ENCODE measurements at regions of chr15 and their contacts with region 1.

Region 1: GRCh38 chr15:98548154-98548971 is 100.0 kb upstream of the IGF1R start:
- DNase-seq: peak; percentile 93
- H3K4me3 ChIP-seq: peak overlapping the region; percentile 39 to 60 (median 54)
- H3K27ac ChIP-seq: peak overlapping the region; percentile 86 to 94 (median 92)
- H3K4me1 ChIP-seq: peaks cover 0 to 27% (median 16%) of the 10 kb centered on the region in 4 donors
- H3K27me3 ChIP-seq: no peaks in the 10 kb centered on the region
- CTCF ChIP-seq: peak in 2 of 4 experiments; percentile 14 to 22
- EP300 ChIP-seq: peak in 1 of 4 donors; percentile 73
- POLR2A ChIP-seq: peak; percentile 29 to 31

Region 2: GRCh38 chr15:98076021-98076816 is 472.1 kb before region 1 on chr15:
- intact Hi-C with region 1: no loop called
- DNase-seq: peak; percentile 78
- H3K4me3 ChIP-seq: no peak overlapping the region
- H3K27ac ChIP-seq: peak overlapping the region; percentile 72 to 80 (median 76)
- H3K4me1 ChIP-seq: peaks cover 0 to 27% (median 23%) of the 10 kb centered on the region in 4 donors
- H3K27me3 ChIP-seq: no peaks in the 10 kb centered on the region
- CTCF ChIP-seq: no peak
- EP300 ChIP-seq: no peak
- POLR2A ChIP-seq: no peak

Region 3: DNA sequence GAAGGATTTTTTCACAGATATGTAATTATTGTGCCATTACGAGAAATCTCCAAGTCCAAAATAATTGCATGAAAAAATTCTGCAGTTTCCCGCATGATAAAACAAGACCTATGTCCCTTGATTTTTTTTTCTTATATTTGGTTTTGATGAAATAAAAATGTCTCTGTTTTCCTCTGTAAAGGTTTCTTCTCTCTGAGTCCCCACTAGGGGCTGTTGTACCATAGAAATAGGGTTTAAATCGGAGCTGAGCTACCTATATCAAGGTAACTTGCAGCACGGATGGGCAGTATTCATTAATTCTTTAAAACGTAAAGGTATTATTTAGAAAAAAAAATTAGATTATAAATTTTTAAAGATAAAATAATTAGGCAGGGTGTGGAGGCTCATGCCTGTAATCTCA is 33.4 kb after region 1 on chr15:
- intact Hi-C with region 1: no loop called
- DNase-seq: no peak
- H3K4me3 ChIP-seq: no peak overlapping the region
- H3K27ac ChIP-seq: no peak overlapping the region
- H3K4me1 ChIP-seq: peaks cover 0 to 11% (median 9%) of the 10 kb centered on the region in 4 donors
- H3K27me3 ChIP-seq: peaks cover 0 to 12% (median 5%) of the 10 kb centered on the region in 3 donors
- CTCF ChIP-seq: no peak
- EP300 ChIP-seq: no peak
- POLR2A ChIP-seq: no peak

Region 4: GRCh38 chr15:98599909-98600691 is 51.7 kb after region 1 on chr15:
- intact Hi-C with region 1: loop called (anchors 2 kb)
- DNase-seq: no peak
- H3K4me3 ChIP-seq: peak overlapping the region; percentile 30 to 50 (median 46)
- H3K27ac ChIP-seq: peak overlapping the region; percentile 12 to 71 (median 70)
- H3K4me1 ChIP-seq: peaks cover 0 to 23% (median 17%) of the 10 kb centered on the region in 4 donors
- H3K27me3 ChIP-seq: no peaks in the 10 kb centered on the region
- CTCF ChIP-seq: no peak
- EP300 ChIP-seq: no peak
- POLR2A ChIP-seq: no peak